Activated CD4-positive, alpha-beta T cell treated with anti-CD3 and anti-CD28 coated beads for 36 hours (primary cell): ENCODE measurements at regions of chrX and their contacts with region 1.

Region 1: GRCh38 chrX:56248492-56248891 is 16.3 kb downstream of the KLF8 start:
- DNase-seq: peak; percentile 76
- ATAC-seq: peak; percentile 57
- H3K4me3 Mint-ChIP-seq: no peak overlapping the region
- H3K27ac Mint-ChIP-seq: no peak overlapping the region
- H3K4me1 Mint-ChIP-seq: peaks cover 10% of the 10 kb centered on the region
- H3K27me3 Mint-ChIP-seq: no peaks in the 10 kb centered on the region

Region 2: DNA sequence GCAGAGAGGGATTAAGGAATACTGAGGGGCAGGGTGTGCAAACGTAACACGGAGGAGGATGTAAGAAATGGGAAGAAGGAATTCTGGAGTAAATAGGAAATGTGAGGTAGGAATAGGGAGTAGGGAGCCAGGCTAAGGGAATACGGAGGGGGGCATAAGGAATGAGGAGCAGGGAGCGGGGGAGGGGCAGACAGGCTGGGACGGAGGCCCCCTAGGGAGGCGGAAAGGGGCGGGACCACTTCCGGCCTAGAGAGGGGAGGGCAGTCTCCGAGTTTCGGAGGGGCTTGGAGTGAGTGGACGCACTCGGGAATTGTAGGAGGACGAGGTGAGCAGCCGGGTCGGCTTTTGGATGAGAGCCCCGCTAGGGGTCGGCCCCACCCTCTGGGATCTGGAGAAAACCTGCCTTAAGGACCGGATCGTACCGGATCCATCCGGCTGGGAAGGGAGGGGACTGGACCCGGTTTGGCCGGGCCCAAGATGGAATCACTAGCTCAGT is 1440.3 kb before region 1 on chrX:
- CTCF ChIA-PET with region 1: no interaction called
- POLR2A ChIA-PET with region 1: no interaction called
- intact Hi-C with region 1: no loop called
- DNase-seq: peak; percentile 58
- ATAC-seq: peak; percentile 20
- H3K4me3 Mint-ChIP-seq: peak overlapping the region; percentile 87
- H3K27ac Mint-ChIP-seq: peak overlapping the region; percentile 89
- H3K4me1 Mint-ChIP-seq: peaks cover 16% of the 10 kb centered on the region
- H3K27me3 Mint-ChIP-seq: no peaks in the 10 kb centered on the region

Region 3: GRCh38 chrX:55135171-55135570 is 1113.3 kb before region 1 on chrX:
- CTCF ChIA-PET with region 1: interaction called, 5 read pairs
- POLR2A ChIA-PET with region 1: no interaction called
- intact Hi-C with region 1: loop called (anchors 1 to 10 kb)
- DNase-seq: peak; percentile 54
- ATAC-seq: no peak
- H3K4me3 Mint-ChIP-seq: no peak overlapping the region
- H3K27ac Mint-ChIP-seq: no peak overlapping the region
- H3K4me1 Mint-ChIP-seq: no peaks in the 10 kb centered on the region
- H3K27me3 Mint-ChIP-seq: no peaks in the 10 kb centered on the region

Region 4: GRCh38 chrX:55841962-55842752 is 406.3 kb before region 1 on chrX:
- CTCF ChIA-PET with region 1: no interaction called
- POLR2A ChIA-PET with region 1: no interaction called
- intact Hi-C with region 1: loop called in 1 of 2 experiments (anchors 5 kb)
- DNase-seq: no peak
- ATAC-seq: no peak
- H3K4me3 Mint-ChIP-seq: no peak overlapping the region
- H3K27ac Mint-ChIP-seq: no peak overlapping the region
- H3K4me1 Mint-ChIP-seq: no peaks in the 10 kb centered on the region
- H3K27me3 Mint-ChIP-seq: no peaks in the 10 kb centered on the region

Region 5: DNA sequence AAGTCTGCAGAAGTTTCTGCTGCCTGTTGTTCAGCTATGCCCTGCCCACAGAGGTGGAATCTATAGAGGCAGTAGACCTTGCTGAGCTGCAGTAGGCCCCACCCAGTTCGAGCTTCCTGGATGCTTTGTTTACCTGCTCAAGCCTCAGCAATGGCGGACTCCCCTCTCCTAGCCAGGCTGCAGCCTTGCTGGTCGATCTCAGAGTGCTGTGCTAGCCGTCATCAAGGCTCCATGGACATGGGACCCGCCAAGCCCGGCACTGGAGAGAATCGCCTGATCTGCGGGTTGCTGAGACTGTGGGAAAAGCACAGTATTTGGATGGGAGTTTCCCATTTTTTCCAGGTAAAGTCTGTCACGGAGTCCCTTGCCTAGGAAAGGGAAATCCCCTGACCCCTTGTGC is 141.2 kb before region 1 on chrX:
- CTCF ChIA-PET with region 1: no interaction called
- POLR2A ChIA-PET with region 1: no interaction called
- intact Hi-C with region 1: no loop called
- DNase-seq: no peak
- ATAC-seq: no peak
- H3K4me3 Mint-ChIP-seq: no peak overlapping the region
- H3K27ac Mint-ChIP-seq: no peak overlapping the region
- H3K4me1 Mint-ChIP-seq: no peaks in the 10 kb centered on the region
- H3K27me3 Mint-ChIP-seq: no peaks in the 10 kb centered on the region

Region 6: GRCh38 chrX:56429581-56429980 is 181.1 kb after region 1 on chrX:
- CTCF ChIA-PET with region 1: no interaction called
- POLR2A ChIA-PET with region 1: no interaction called
- intact Hi-C with region 1: no loop called
- DNase-seq: peak; percentile 4
- ATAC-seq: no peak
- H3K4me3 Mint-ChIP-seq: no peak overlapping the region
- H3K27ac Mint-ChIP-seq: no peak overlapping the region
- H3K4me1 Mint-ChIP-seq: peaks cover 8% of the 10 kb centered on the region
- H3K27me3 Mint-ChIP-seq: no peaks in the 10 kb centered on the region